Adrenal gland (tissue), 19 donors: ENCODE measurements at regions of chr10 and their contacts with region 1.

Region 1: DNA sequence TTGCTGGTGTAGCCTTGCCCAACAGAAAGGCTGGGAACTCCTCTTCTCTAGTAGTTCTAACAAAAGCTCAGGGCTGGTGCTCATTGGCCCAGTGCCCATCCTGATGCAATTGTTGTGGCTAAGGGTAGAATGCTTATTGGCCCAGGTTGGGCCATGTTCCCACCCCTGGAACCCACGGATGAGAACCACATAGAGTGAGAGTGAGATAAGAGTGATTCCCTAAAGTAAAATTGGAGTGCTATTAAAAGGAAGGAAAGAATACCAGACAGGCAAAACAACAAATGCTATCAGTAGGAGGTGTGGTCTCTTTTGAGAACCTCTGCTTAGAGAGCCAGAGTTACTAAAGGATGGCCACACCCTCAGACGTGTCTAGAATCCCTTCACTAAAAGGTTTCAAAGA is 49.2 kb downstream of the LGI1 start:
- DNase-seq: no peak
- H3K4me3 ChIP-seq: no peak overlapping the region
- H3K27ac ChIP-seq: no peak overlapping the region
- H3K4me1 ChIP-seq: no peaks in the 10 kb centered on the region
- H3K27me3 ChIP-seq: no peaks in the 10 kb centered on the region
- CTCF ChIP-seq: no peak
- POLR2A ChIP-seq: no peak

Region 2: DNA sequence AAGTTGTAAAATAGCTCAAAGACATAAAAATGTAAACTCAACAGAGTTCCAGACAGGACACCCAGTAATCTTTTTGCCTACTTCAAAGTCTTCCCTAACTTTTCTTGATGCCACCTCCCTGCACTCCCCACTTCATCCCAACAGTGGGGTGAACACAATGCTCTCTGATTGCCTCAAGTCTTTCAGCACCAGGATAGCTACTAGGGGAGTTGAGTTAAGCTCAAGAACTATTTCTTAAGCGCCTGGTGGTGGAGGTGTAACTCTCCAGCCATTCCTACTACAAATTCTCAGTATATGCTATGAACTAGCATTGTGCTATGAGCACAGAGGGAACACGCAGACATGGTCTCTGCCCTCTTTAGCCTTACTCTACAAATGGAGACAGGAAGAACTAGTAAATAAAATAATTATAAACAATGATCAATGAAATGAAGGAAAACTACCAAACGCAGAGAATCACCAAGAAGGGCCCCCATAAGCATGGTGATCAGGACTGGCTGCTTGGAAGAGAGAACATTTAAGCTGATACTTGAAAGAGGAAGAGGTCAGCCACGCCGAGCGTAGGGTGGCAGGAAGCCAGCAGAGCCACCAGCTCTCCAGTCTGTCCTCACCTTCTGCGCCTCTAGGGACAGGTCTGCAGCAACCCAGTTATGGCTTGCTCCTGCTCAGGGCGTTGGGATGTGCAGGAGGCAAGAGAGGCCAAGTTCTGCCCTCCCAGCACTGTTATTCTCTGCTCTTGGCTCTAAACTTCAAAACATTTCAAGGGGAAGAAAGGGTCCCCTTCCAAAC is 87.8 kb before region 1 on chr10:
- intact Hi-C with region 1: loop called in 1 of 2 experiments (anchors 10 kb)
- DNase-seq: peak in 1 of 7 donors; percentile 17
- H3K4me3 ChIP-seq: no peak overlapping the region
- H3K27ac ChIP-seq: no peak overlapping the region
- H3K4me1 ChIP-seq: no peaks in the 10 kb centered on the region
- H3K27me3 ChIP-seq: no peaks in the 10 kb centered on the region
- CTCF ChIP-seq: no peak
- POLR2A ChIP-seq: no peak